Mammary epithelial cell (primary cell): ENCODE measurements at regions of chr22 and their contacts with region 1.

Region 1: GRCh38 chr22:28772633-28773460 is at the start of gene CCDC117:
- DNase-seq: peak; percentile 86
- H3K4me3 ChIP-seq: peak within 1 kb of the TSS; percentile 80 to 96 (median 83)
- H3K27ac ChIP-seq: peak within 1 kb of the TSS; percentile 87
- H3K4me1 ChIP-seq: peaks cover 5% of the 10 kb centered on the region
- H3K27me3 ChIP-seq: no peaks in the 10 kb centered on the region
- CTCF ChIP-seq: peak in 1 of 2 donors; percentile 19
- total RNA-seq, gene CCDC117: 10.6 to 16.0 TPM

Region 2: GRCh38 chr22:28711820-28712777 is 60.7 kb before region 1 on chr22:
- CTCF ChIA-PET with region 1: interaction called, 6 read pairs
- dilution Hi-C with region 1: no loop called
- in situ Hi-C with region 1: no loop called
- intact Hi-C with region 1: loop called (anchors 2 kb)
- DNase-seq: peak; percentile 88
- H3K4me3 ChIP-seq: no peak overlapping the region
- H3K27ac ChIP-seq: no peak overlapping the region
- H3K4me1 ChIP-seq: peaks cover 23% of the 10 kb centered on the region
- H3K27me3 ChIP-seq: no peaks in the 10 kb centered on the region
- CTCF ChIP-seq: no peak

Region 3: DNA sequence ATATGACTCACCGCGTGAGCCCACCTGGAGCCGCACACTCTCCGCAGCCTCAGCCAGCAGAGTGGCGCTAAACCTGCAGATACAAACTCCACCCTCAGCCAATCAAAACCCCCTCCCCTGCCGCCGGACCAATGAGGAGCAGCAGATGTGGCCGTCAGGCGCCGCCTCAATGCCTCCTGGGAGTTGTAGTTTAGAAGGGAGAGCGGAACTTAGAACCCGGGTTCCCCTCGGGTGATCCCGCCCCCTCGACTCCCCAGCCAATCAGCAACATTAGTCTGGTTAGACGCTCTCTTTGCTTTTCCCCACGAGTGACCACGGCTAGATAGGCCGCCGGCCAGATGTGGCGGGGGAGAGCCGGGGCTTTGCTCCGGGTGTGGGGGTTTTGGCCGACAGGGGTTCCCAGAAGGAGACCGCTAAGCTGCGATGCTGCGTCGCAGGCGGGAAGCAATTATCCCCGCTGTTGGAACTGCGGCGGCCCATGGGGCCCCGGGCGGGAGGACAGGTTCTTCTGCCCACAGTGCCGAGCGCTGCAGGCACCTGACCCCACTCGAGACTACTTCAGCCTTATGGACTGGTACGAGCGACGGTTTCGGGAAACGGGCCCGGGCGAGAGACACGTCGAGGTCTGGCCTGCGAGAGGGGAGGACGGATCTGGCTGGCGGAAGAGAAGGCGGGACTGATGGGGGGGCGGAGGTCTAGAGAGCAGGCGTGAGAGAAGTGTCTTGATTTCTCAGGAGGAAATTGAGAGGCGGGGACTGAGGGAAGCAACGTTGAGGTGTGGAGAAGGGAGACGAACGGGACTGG is 30.9 kb before region 1 on chr22 and contains the starts of genes CHEK2 and HSCB:
- CTCF ChIA-PET with region 1: no interaction called
- dilution Hi-C with region 1: no loop called
- in situ Hi-C with region 1: no loop called
- intact Hi-C with region 1: loop called (anchors 1 kb)
- DNase-seq: peak; percentile 98
- H3K4me3 ChIP-seq: peak within 1 kb of the TSS; percentile 89 to 93 (median 90)
- H3K27ac ChIP-seq: peak within 1 kb of the TSS; percentile 71
- H3K4me1 ChIP-seq: peaks cover 10% of the 10 kb centered on the region
- H3K27me3 ChIP-seq: no peaks in the 10 kb centered on the region
- CTCF ChIP-seq: no peak
- total RNA-seq, gene CHEK2: 14.2 to 19.2 TPM
- total RNA-seq, gene HSCB: 11.5 to 14.8 TPM

Region 4: GRCh38 chr22:28800308-28801077 is 27.6 kb after region 1 on chr22 and contains the start of gene XBP1:
- CTCF ChIA-PET with region 1: no interaction called
- dilution Hi-C with region 1: no loop called
- in situ Hi-C with region 1: no loop called
- intact Hi-C with region 1: loop called (anchors 2 kb)
- DNase-seq: peak; percentile 95
- H3K4me3 ChIP-seq: peak within 1 kb of the TSS; percentile 67 to 86 (median 72)
- H3K27ac ChIP-seq: peak within 1 kb of the TSS; percentile 98
- H3K4me1 ChIP-seq: peaks cover 10% of the 10 kb centered on the region
- H3K27me3 ChIP-seq: no peaks in the 10 kb centered on the region
- CTCF ChIP-seq: no peak
- total RNA-seq, gene XBP1: 166 to 224 TPM